ENCODE measurements at regions of chr3 and their contacts with region 1.

Region 1: GRCh38 chr3:58177747-58178527 is 32.8 kb downstream of the DNASE1L3 start:
- DNase-seq: peak; percentile 93
- H3K4me3 Mint-ChIP-seq: peak overlapping the region; percentile 50
- H3K27ac Mint-ChIP-seq: no peak overlapping the region
- H3K4me1 Mint-ChIP-seq: peaks cover 22% of the 10 kb centered on the region
- H3K27me3 Mint-ChIP-seq: peaks cover 53% of the 10 kb centered on the region

Region 2: DNA sequence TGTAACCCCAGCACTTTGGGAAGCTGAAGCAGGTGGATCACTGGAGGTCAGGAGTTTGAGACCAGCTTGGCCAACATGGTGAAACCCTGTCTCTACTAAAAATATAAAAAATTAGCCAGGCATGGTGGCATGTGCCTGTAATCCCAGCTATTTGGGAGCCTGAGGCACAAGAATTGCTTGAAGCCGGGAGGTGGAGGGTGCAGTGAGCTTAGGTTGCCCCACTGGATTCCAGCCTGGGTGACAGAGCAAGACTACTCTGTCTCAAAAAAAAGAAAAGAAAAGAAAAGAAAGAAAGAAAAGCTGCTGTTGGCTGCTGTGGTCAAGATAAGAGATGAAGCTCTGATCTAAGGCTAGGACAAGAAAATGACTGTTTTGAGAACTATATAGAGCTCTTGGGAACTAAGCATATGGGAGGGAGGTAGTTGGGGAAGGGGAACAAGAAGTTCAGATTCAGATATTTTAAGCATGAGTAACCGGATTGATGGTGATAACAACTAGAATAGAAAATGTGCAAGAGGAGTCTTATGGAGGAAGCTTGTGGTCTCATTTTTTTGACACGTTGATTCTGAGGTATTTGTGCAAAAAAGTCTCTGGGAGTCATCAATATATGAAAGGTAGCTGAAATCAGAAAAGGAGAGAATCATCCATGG is 659.5 kb before region 1 on chr3:
- CTCF ChIA-PET with region 1: no interaction called
- DNase-seq: no peak
- H3K4me3 Mint-ChIP-seq: no peak overlapping the region
- H3K27ac Mint-ChIP-seq: no peak overlapping the region
- H3K4me1 Mint-ChIP-seq: no peaks in the 10 kb centered on the region
- H3K27me3 Mint-ChIP-seq: peaks cover 12% of the 10 kb centered on the region

Region 3: GRCh38 chr3:58008140-58009025 is 169.6 kb before region 1 on chr3 and contains the start of gene FLNB:
- CTCF ChIA-PET with region 1: interaction called, 34 read pairs
- DNase-seq: peak; percentile 81
- H3K4me3 Mint-ChIP-seq: peak within 1 kb of the TSS; percentile 82
- H3K27ac Mint-ChIP-seq: peak within 1 kb of the TSS; percentile 81
- H3K4me1 Mint-ChIP-seq: peaks cover 42% of the 10 kb centered on the region
- H3K27me3 Mint-ChIP-seq: no peaks in the 10 kb centered on the region

Region 4: GRCh38 chr3:58144478-58145325 is 33.2 kb before region 1 on chr3:
- CTCF ChIA-PET with region 1: no interaction called
- DNase-seq: no peak
- H3K4me3 Mint-ChIP-seq: no peak overlapping the region
- H3K27ac Mint-ChIP-seq: no peak overlapping the region
- H3K4me1 Mint-ChIP-seq: no peaks in the 10 kb centered on the region
- H3K27me3 Mint-ChIP-seq: no peaks in the 10 kb centered on the region

Region 5: DNA sequence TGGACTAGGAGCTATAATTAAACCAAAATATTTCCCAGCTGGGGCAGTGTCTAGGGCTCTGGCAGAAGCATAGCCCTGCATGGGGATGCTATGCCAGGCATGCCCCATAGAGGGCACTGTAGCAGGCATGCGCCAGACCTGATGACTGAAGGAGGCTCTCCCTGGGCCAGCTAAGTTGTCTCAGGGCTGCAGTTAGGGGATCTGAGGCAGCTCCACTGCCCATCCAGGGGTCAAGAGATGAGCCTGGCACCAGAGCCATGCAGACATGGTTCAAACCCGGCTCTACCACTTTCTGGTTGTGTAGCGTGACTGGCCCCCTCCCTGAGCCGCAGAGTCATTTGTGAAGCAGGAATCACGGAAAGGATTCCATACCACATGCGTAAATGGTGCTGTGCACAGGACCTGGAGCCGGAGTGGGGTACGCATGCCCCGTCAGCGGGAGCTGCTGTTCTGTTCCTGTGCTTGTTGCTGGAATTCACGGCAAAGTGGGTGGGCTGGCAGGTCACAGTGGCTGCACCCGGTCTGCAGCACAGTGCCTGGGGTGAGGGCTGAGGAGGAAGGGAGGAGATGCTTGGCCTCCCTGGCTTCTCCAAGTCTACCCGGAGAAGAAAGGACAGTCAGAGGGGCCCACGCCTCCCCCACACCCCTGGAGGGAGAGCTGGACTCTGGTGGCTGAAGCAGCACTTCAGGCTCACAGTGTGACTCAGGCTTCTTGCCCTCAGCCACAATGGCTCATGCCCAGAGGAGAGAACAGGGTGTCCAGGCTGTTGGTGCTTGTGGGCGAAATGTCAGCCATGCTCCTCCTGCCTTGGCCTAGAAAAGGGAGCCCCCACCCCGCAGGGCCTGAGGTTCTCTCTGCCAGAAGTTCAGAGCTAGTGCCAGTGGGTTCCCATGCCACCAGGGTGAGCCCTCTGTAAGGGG is 10.2 kb before region 1 on chr3:
- CTCF ChIA-PET with region 1: interaction called, 50 read pairs
- DNase-seq: peak; percentile 76
- H3K4me3 Mint-ChIP-seq: no peak overlapping the region
- H3K27ac Mint-ChIP-seq: no peak overlapping the region
- H3K4me1 Mint-ChIP-seq: no peaks in the 10 kb centered on the region
- H3K27me3 Mint-ChIP-seq: no peaks in the 10 kb centered on the region

Region 6: GRCh38 chr3:58188173-58188564 is 10.2 kb after region 1 on chr3:
- CTCF ChIA-PET with region 1: interaction called, 15 read pairs
- DNase-seq: no peak
- H3K4me3 Mint-ChIP-seq: no peak overlapping the region
- H3K27ac Mint-ChIP-seq: no peak overlapping the region
- H3K4me1 Mint-ChIP-seq: peaks cover 4% of the 10 kb centered on the region
- H3K27me3 Mint-ChIP-seq: peaks cover 9% of the 10 kb centered on the region

Region 7: DNA sequence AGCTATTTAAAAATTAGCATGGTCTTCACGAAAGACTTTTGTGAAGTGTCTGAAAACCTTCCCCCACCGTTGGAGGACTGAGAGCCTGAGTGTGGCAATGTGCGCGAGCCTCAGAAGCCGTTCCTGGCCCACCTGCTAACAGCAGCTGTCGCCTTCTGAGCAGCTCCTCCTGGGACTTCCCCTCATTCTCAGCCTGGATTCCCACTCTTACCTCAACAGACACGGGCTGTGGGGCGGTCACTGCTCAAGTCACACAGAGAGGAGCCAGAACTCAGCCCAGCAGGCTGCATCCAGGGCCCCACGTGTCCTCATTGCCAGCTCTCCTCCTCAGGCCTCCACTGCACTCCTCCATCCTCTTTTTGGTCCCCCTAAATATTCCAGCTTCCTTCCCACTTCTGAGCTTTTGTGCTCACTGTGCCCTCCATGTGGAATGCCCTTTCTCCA is 25.0 kb after region 1 on chr3:
- CTCF ChIA-PET with region 1: interaction called, 10 read pairs
- DNase-seq: no peak
- H3K4me3 Mint-ChIP-seq: no peak overlapping the region
- H3K27ac Mint-ChIP-seq: no peak overlapping the region
- H3K4me1 Mint-ChIP-seq: peaks cover 12% of the 10 kb centered on the region
- H3K27me3 Mint-ChIP-seq: peaks cover 51% of the 10 kb centered on the region

Region 8: GRCh38 chr3:58217209-58217811 is 39.4 kb after region 1 on chr3:
- CTCF ChIA-PET with region 1: interaction called, 26 read pairs
- DNase-seq: peak; percentile 69
- H3K4me3 Mint-ChIP-seq: no peak overlapping the region
- H3K27ac Mint-ChIP-seq: no peak overlapping the region
- H3K4me1 Mint-ChIP-seq: peaks cover 8% of the 10 kb centered on the region
- H3K27me3 Mint-ChIP-seq: peaks cover 23% of the 10 kb centered on the region

Region 9: GRCh38 chr3:58299839-58300516 is 122.0 kb after region 1 on chr3:
- CTCF ChIA-PET with region 1: interaction called, 16 read pairs
- DNase-seq: no peak
- H3K4me3 Mint-ChIP-seq: no peak overlapping the region
- H3K27ac Mint-ChIP-seq: no peak overlapping the region
- H3K4me1 Mint-ChIP-seq: peaks cover under 1% of the 10 kb centered on the region
- H3K27me3 Mint-ChIP-seq: peaks cover 51% of the 10 kb centered on the region

Measured in activated naive CD4-positive, alpha-beta T cell treated with anti-CD3 and anti-CD28 coated beads, Interleukin-2, amount 10 ng/mL, durations not matched to agents 7 days and 5 days (primary cell).